ENCODE measurements at regions of chr11 and their contacts with region 1.

Region 1: GRCh38 chr11:96389720-96390487 is at the starts of genes CCDC82 and JRKL:
- DNase-seq: peak; percentile 91 to 99 (median 98)

Region 2: DNA sequence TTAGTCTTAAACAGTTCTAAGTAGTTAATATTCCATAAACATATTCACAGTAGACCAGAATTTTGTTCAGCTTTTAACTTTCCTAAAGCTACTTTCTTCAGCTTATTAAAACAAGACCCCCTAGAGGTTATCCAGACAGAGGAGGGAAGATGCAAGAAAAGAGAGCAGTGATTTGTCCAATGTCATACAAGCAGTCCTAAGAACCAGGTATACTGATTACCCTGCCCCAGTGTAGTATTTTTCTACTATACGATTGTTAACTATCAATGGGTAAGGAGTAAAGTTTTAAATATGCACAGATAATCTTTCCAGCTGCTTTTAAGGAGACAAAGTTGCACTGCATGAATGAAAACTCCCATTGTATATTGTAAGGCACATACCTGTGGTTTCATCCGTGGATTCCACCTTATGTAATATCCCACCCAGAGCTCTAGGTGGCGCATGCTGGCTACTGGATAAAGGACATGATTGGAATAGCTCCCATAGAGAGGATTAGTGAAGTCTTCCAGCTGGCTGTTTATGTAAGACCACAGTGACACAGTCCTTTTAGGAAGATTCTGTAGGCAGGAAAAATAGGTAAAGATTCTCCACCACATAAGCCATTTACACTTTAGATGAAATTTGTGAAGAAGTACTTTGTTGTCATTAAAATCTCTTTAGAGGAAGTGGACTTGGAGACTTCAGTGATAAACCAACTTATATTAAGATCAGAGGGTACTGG is 554.0 kb before region 1 on chr11:
- intact Hi-C with region 1: loop called (anchors 10 kb)
- DNase-seq: peak; percentile 18 to 82 (median 60)

Region 3: GRCh38 chr11:96506953-96507354 is 117.0 kb after region 1 on chr11:
- intact Hi-C with region 1: no loop called
- DNase-seq: no peak